ENCODE measurements at regions of chr2 and their contacts with region 1.

Region 1: GRCh38 chr2:1591978-1592907 is 152.1 kb downstream of the PXDN start:
- DNase-seq: peak; percentile 77
- ATAC-seq: peak; percentile 69
- H3K4me3 ChIP-seq: no peak overlapping the region
- H3K27ac ChIP-seq: no peak overlapping the region
- H3K4me1 ChIP-seq: peaks cover 21% of the 10 kb centered on the region
- H3K27me3 ChIP-seq: peaks cover 2% of the 10 kb centered on the region; the same call in 1 of the 2 replicates
- CTCF ChIP-seq: peak; percentile 72
- POLR2A ChIP-seq: 0 out of 2 replicates have a peak, but pooled peaks have one; percentile 13
- RAD21 ChIP-seq: peak; percentile 79

Region 2: GRCh38 chr2:1538663-1539062 is 53.6 kb before region 1 on chr2:
- CTCF ChIA-PET with region 1: no interaction called
- POLR2A ChIA-PET with region 1: no interaction called
- dilution Hi-C with region 1: no loop called
- in situ Hi-C with region 1: no loop called
- intact Hi-C with region 1: no loop called
- DNase-seq: peak; percentile 34
- ATAC-seq: peak; percentile 73
- H3K4me3 ChIP-seq: no peak overlapping the region
- H3K27ac ChIP-seq: no peak overlapping the region
- H3K4me1 ChIP-seq: peaks cover 2% of the 10 kb centered on the region; the same call in 1 of the 2 replicates
- H3K27me3 ChIP-seq: peaks cover 2% of the 10 kb centered on the region; the same call in 1 of the 2 replicates
- CTCF ChIP-seq: peak; percentile 64
- POLR2A ChIP-seq: no peak
- RAD21 ChIP-seq: peak; percentile 46

Region 3: DNA sequence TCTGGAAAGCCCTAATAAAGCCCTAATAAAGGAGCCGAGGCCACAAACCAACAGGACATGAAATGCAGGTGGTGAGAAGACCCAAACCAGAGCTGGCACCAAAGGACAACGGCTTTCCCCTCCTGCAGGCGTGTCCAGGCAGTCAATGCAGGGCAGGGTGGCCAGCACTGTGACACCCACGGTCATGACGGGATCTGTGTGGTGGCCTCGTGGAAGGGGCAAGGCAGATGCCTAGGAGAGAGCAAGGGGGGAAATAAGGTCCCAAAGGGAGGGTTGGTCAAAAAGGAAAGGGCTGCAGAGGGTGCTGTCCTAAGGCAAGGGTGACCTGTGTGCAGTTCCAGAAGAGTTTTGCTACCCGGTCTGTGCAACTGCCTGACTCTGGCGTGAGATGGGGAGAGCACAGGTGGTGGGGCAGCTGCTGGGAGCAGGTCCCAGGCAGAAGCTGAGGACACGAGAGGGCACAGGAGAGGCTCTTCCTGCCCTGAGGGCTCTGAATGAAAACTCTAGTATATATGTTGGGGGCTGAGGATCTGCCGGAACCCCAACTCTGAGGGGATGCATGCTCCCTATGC is 22.3 kb before region 1 on chr2:
- CTCF ChIA-PET with region 1: interaction called, 3 read pairs
- POLR2A ChIA-PET with region 1: interaction called, 20 read pairs
- dilution Hi-C with region 1: no loop called
- in situ Hi-C with region 1: no loop called
- intact Hi-C with region 1: no loop called
- DNase-seq: no peak
- ATAC-seq: no peak
- H3K4me3 ChIP-seq: no peak overlapping the region
- H3K27ac ChIP-seq: no peak overlapping the region
- H3K4me1 ChIP-seq: no peaks in the 10 kb centered on the region; the same call in 1 of the 2 replicates
- H3K27me3 ChIP-seq: peaks cover 12% of the 10 kb centered on the region
- CTCF ChIP-seq: no peak
- POLR2A ChIP-seq: no peak
- RAD21 ChIP-seq: no peak

Region 4: DNA sequence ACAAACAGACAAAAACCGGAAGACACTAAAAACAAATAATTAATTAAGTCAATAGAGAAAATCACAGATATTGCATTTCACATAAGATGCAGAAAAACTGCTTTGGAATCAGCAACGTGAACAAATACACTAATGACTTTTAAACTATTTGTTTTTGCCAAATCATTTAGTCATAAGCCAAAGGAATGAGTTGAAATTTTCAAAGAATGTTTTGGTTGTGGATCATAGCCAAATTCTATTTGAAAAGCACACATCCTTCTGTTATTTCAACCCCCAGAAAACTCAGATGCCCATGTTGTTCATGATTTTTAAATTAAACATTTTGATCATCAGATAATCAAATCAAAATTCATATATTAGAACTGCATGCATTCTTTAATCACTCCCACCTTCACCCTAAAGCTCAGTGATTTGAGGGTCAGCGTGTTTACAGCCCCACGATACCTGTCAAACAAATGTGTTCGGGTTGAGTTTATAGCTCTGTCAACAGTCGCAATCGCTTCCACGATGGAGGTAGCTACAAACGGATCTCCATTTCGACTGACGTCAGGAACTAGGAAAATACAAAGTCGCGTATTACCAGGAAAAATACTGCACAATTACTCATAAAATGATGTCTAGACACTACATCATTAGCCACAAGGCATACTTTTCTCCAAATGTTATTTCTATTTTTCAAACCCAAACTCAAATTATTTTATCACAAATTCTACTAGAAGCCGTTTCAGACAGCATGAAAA is 61.9 kb after region 1 on chr2:
- CTCF ChIA-PET with region 1: interaction called, 3 read pairs
- POLR2A ChIA-PET with region 1: no interaction called
- dilution Hi-C with region 1: no loop called
- in situ Hi-C with region 1: no loop called
- intact Hi-C with region 1: loop called (anchors 1 kb)
- DNase-seq: peak; percentile 87
- ATAC-seq: no peak
- H3K4me3 ChIP-seq: no peak overlapping the region
- H3K27ac ChIP-seq: peak overlapping the region; percentile 91
- H3K4me1 ChIP-seq: peaks cover 34% of the 10 kb centered on the region
- H3K27me3 ChIP-seq: no peaks in the 10 kb centered on the region
- CTCF ChIP-seq: no peak
- POLR2A ChIP-seq: 0 out of 2 replicates have a peak, but pooled peaks have one; percentile 8
- RAD21 ChIP-seq: no peak

Region 5: GRCh38 chr2:1742681-1743395 is 150.6 kb after region 1 on chr2:
- CTCF ChIA-PET with region 1: interaction called, 3 read pairs
- POLR2A ChIA-PET with region 1: no interaction called
- dilution Hi-C with region 1: no loop called
- in situ Hi-C with region 1: no loop called
- intact Hi-C with region 1: loop called (anchors 2 kb)
- DNase-seq: peak; percentile 90
- ATAC-seq: peak; percentile 55
- H3K4me3 ChIP-seq: peak overlapping the region; percentile 52
- H3K27ac ChIP-seq: peak overlapping the region; percentile 80
- H3K4me1 ChIP-seq: peaks cover 37% of the 10 kb centered on the region
- H3K27me3 ChIP-seq: no peaks in the 10 kb centered on the region
- CTCF ChIP-seq: peak; percentile 68
- POLR2A ChIP-seq: peak; percentile 55; the same call in 1 of the 2 replicates
- RAD21 ChIP-seq: peak; percentile 76

Region 6: DNA sequence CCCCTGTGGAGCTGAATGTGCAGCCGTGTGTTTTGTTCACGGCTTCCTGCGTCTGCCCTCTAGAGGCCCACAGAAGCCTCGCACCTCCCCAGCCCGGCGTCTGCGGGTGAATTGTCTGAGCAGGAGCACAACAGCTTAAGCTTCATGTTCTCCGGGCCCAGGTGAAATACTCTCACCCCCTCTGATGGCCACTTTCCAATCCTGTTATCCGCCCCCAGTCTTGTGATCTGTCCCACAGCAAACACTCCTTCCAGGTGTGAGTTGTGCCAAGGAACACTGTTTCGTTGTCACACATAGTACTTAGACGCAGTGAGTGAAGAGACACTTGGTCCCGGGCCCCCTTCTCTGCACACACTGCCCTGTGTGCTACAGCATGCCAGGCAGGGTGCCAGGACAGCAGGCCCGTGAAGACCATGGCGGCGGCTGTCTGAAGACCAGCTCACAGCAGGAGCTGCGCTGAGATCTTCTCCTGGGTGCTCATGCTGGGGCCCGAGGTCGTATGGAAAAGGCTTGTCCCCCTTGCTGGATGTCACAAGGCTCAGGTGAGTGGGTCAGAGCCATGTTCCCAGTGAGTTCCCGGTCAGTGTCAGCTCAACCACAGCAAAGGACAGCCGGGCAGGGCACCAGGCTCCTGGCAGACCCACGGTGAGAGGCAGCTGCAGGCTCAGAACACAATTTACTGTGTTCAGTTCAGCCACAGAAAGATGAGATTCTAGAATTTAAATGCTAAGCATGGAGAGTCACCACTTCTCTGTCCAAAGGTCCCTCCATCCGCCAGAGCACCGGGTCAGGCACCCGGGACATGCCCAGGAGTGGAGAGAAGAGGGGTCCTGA is 158.9 kb after region 1 on chr2:
- CTCF ChIA-PET with region 1: interaction called, 7 read pairs
- POLR2A ChIA-PET with region 1: no interaction called
- dilution Hi-C with region 1: no loop called
- in situ Hi-C with region 1: loop called (anchors 25 kb)
- intact Hi-C with region 1: no loop called
- DNase-seq: peak; percentile 86
- ATAC-seq: peak; percentile 93
- H3K4me3 ChIP-seq: no peak overlapping the region
- H3K27ac ChIP-seq: 0 out of 2 replicates have a peak overlapping the region, but pooled peaks have one; percentile 4
- H3K4me1 ChIP-seq: peaks cover 19% of the 10 kb centered on the region
- H3K27me3 ChIP-seq: no peaks in the 10 kb centered on the region
- CTCF ChIP-seq: peak; percentile 95
- POLR2A ChIP-seq: no peak
- RAD21 ChIP-seq: peak; percentile 88